Left lung (tissue), 14 donors: ENCODE measurements at regions of chr20 and their contacts with region 1.

Region 1: GRCh38 chr20:478949-479429 is 16.7 kb upstream of the TBC1D20 start:
- DNase-seq: peak in 2 of 4 donors; percentile 38 to 66
- ATAC-seq: peak; percentile 79
- H3K4me3 ChIP-seq: no peak overlapping the region
- H3K27ac ChIP-seq: no peak overlapping the region
- H3K4me1 ChIP-seq: no peaks in the 10 kb centered on the region
- H3K27me3 ChIP-seq: no peaks in the 10 kb centered on the region
- CTCF ChIP-seq: peak; percentile 36 to 63

Region 2: DNA sequence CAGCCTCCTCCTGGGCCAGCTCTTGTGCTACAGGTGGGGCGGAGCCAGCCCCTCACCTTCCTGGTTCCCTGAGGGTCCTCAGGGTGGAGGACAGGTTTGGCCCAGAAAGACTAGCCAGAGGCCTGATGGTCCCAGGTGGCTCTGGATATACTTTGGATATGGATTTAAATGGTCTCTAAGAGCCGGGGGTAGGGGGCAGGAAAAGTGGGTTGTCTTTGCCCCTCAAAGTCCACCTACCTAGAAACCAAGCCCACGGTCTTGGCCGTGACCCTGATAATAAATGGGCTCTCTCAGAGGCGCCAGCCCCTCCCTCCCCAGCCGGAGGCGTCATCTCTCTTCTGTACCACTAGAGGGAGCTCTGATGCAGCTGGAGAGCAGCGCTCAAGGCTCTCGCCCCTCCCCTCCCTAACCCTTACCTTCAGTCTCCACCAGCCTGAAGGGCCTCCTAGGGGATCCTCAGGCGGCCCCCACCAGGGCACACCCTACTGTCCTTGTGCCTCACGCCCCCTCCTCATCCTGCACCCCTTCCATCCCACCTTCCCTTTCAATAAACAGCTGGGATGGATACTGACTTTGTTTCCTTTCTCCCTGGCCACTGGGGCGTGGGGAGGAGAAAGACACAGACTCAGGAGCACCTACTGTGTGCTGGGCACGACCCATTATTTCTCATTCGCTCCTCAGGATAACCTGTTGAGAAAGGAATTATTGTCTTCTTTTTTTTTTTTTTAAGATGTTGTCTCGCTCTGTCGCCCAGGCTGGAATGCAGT is 124.5 kb before region 1 on chr20:
- intact Hi-C with region 1: loop called in 1 of 2 experiments (anchors 2 kb)
- DNase-seq: peak; percentile 71 to 89 (median 81)
- ATAC-seq: peak; percentile 97
- H3K4me3 ChIP-seq: no peak overlapping the region
- H3K27ac ChIP-seq: no peak overlapping the region
- H3K4me1 ChIP-seq: peaks cover 0 to 10% of the 10 kb centered on the region in 2 donors
- H3K27me3 ChIP-seq: no peaks in the 10 kb centered on the region
- CTCF ChIP-seq: peak; percentile 97 to 98